ENCODE measurements at regions of chr6 and their contacts with region 1.

Region 1: GRCh38 chr6:42043787-42044475 is 6.4 kb upstream of the TAF8 start:
- DNase-seq: peak; percentile 96
- ATAC-seq: peak; percentile 79

Region 2: GRCh38 chr6:41779793-41780545 is 264.0 kb before region 1 on chr6 and contains the start of gene FRS3:
- intact Hi-C with region 1: loop called (anchors 5 kb)
- DNase-seq: peak; percentile 100
- ATAC-seq: peak; percentile 97
- total RNA-seq, gene FRS3: 6.5 TPM

Region 3: DNA sequence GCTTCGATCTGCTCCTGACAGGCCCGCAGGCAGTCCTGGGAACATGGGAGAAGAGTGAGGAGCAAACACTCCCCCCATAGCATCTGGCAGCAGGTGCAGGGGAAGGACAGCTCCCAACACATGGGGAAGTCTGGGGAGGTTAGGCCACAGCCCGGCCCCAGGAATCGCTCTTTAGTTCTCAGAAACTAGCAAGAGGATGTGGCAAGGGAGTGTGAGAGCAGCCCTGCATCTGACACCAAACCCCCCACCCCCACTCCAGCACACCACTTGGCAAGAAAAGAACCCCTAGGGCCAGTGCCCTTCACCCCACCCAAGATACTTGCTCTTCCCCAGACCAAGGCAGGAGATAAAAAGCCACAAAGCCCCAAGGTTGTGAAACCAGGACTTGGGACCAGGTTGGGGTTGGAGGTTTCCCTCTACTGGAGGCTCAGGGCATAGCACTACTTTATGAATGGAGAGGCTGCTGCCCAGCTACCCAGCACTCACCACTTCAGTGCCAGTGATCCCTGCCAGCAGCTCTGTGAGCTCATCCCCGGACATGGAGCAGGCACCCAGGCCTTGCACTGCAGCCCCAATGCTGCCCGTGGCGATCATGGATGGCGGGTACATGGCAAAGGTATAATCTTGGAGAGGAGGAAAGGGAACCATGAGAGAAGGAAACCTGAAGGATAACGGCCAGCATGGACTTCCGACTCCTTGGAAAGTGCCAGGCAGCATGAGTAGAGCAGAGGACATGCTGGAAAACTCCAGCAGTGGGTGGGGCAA is 107.7 kb before region 1 on chr6:
- intact Hi-C with region 1: loop called (anchors 5 kb)
- DNase-seq: peak; percentile 69
- ATAC-seq: peak; percentile 69

Measured in sciatic nerve (tissue), 2 donors.